ENCODE measurements at regions of chr5 and their contacts with region 1.

Region 1: GRCh38 chr5:113606298-113607134 is 93.0 kb downstream of the YTHDC2 start:
- DNase-seq: peak in 1 of 3 donors; percentile 55
- ATAC-seq: peak; percentile 67
- H3K4me3 ChIP-seq: no peak overlapping the region
- H3K4me1 ChIP-seq: no peaks in the 10 kb centered on the region
- CTCF ChIP-seq: peak; percentile 11

Region 2: DNA sequence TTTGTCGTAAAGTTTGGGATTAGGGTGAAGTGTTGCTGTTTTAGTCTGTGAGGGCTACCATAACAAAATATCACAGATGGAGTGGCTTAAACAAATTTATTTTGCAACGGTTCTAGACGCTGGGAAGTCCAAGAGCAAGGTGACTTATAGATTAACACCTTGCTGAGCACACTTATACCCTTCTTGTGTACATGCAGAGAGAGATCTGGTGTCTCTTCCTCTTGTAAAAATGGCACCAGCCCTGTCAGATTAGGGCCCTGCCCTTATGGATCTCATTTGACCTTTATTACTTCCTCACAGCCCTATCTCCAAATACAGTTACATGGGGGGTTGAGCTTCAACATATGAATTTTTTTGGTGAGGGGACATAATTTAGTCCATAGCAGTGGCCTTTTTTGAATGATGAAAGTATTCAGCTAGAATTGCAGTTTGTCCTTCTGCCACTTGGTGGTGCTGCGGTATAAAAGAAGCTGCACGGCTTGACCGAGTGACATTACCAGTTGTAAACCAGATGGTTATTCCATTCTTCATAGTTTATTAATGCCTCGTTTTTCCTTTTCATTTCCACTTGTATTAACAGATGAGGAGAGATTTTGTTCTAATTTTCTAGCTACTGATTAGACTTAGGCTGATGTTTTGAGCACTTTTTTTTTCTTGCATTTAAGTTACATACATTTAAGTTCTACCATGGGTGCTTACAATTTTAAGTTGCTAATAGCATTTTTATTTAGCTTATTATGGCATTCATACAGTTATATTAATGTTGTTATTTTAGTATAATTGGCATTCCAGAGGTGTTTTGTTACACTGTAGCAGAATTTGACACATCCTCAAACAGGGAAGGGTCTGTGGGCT is 610.5 kb before region 1 on chr5:
- intact Hi-C with region 1: loop called in 1 of 2 experiments (anchors 10 kb)
- DNase-seq: peak in 2 of 3 donors; percentile 53 to 88
- ATAC-seq: peak; percentile 85
- H3K4me3 ChIP-seq: no peak overlapping the region
- H3K4me1 ChIP-seq: no peaks in the 10 kb centered on the region
- CTCF ChIP-seq: peak; percentile 84

Region 3: DNA sequence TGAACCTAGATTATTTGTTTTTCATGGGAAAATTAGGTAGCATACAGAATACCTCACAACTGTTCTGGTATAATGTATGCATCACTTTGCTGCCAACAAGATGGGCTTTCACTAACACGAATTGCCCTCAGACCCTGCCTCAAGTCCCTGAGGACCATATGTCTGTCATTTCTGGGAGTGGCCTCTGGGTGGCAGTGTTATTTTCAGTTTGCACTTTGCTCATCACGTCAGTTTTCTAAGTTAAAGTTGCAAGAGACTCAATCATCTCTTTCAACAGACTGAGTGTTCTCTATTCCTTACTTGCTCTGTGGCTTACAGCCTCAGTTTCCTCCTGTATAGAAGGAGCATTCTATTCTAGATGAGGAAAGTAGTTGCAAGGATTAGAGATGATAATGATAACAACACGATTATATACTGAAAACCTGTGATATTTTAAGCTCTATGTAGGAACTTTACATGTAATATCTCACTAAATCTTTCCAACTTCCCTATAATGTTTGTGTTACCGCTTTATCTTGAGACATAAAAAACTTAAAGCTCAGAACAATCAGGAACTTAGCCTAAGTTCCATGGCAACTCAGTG is 227.5 kb before region 1 on chr5:
- intact Hi-C with region 1: loop called in 1 of 2 experiments (anchors 10 kb)
- DNase-seq: peak in 2 of 3 donors; percentile 26 to 61
- ATAC-seq: peak; percentile 70
- H3K4me3 ChIP-seq: no peak overlapping the region
- H3K4me1 ChIP-seq: no peaks in the 10 kb centered on the region
- CTCF ChIP-seq: peak; percentile 26

Region 4: DNA sequence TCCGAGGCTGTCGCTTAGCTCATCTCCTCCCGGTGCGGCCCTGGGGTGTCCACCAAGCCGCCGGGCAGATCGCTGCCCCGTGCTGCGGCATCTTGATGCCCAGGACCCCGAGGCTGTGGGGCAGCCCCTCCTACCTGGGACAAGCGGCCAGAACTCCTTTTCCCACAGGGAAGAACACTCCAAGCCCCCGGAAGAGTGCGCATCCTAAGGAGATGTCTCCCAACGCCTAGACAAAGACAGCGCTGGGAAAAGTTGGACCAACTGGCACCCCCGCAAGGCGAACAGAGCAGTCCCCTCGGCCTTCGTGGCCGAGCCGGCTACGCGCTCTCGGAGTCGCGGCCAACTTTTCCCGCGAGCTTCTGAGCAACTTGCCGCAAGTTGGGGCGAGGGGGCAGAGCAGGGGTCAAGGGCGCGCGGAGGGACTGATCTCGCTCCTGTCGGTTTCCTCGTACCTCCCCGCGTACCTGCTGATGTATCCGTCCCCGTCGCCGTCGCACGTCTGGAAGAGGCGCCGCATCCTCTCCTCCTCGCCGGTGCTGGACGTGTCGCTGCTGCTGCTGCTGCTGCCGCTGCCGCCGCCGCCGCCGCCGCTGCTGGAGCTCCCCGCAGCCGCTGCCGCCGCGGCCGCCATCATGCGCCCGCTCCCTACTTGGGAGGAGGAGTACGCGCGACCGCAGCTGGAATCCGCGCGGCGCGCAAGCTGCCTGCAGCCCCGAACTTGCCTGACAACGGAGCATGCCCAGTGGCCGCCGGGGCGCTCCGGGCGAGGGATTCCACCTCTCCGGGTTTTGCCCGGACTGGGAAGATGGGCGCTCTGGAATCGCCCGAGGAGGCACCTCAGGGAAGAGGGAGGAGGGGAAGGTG is 118.5 kb before region 1 on chr5 and contains the start of gene MCC:
- intact Hi-C with region 1: no loop called
- DNase-seq: peak; percentile 62 to 79 (median 78)
- ATAC-seq: peak; percentile 88
- H3K4me3 ChIP-seq: no peak within 1 kb of the TSS
- H3K4me1 ChIP-seq: peaks cover 5% of the 10 kb centered on the region
- CTCF ChIP-seq: no peak
- total RNA-seq, gene MCC: 1.5 to 7.4 (median 4.4) TPM

Region 5: DNA sequence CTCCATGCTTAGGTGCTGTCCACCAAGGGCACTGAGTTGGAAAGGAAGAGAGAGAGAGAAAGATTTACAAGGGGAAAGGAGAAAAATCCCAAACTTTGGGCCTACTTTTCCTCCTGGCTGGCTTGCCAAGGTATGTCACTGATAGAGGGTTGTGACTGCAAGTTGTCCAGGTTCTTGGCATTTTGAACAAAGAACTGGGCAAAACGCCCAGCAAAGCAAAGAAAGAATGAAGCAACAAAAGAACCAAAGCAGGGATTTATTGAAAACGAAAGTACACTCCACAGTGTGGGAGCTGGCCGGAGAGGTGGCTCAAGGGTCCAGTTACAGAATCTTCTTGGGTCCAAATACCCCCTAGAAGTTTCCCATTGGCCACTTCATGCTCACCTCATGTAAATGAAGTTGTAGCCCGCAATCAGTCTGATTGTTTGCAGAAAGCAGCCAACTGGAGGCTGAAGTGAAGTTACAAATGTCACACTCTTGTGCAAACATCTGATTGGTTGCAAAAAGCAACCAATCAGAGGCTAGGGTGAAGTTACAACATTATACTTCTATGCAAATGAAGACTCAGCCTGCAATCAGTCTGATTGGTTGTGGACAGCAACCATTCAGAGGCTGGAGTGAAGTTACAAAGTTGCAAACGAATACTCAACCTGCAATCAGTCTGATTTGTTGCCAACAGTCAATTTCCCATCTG is 170.5 kb after region 1 on chr5:
- intact Hi-C with region 1: no loop called
- DNase-seq: no peak
- ATAC-seq: no peak
- H3K4me3 ChIP-seq: no peak overlapping the region
- H3K4me1 ChIP-seq: no peaks in the 10 kb centered on the region
- CTCF ChIP-seq: no peak